ENCODE measurements at regions of chr20 and their contacts with region 1.

Region 1: DNA sequence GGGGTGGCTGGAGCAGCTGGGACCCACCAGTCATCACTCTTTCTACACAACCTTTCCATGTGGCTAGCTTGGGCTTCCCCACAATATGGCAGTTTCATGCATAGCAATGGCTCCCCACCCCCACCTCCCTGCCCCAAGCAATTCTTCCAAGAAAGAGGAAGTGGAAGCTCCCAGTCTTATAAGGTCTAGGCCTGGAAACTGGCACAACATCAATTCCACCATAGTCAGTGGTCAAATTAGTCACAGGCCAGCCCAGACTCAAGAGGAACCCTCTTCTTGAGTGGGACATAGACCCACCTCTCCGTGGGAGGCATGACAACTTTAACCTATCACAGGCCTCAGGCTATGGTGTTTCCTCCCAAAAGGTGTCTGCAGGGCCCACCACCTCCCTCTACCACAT is 17.7 kb downstream of the TGM6 start:
- DNase-seq: no peak
- H3K4me3 ChIP-seq: no peak overlapping the region
- H3K27ac ChIP-seq: no peak overlapping the region
- H3K4me1 ChIP-seq: no peaks in the 10 kb centered on the region
- CTCF ChIP-seq: no peak

Region 2: DNA sequence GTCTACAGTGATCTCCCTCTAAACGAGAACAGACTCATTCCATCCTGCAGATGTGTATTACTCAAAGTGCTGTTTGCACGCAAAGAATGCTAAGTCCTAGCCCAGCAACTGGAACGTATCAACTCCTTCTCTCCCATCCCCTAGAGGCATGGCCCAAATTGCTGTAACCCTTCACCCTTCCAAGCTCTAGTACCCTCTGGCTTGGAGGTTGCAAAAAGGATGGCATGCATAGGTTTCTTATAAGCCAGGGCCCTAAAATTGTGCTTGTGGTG is 174.1 kb before region 1 on chr20:
- CTCF ChIA-PET with region 1: no interaction called
- POLR2A ChIA-PET with region 1: interaction called, 12 read pairs
- intact Hi-C with region 1: no loop called
- DNase-seq: no peak
- H3K4me3 ChIP-seq: no peak overlapping the region
- H3K27ac ChIP-seq: no peak overlapping the region
- H3K4me1 ChIP-seq: no peaks in the 10 kb centered on the region
- CTCF ChIP-seq: no peak

Measured in OCI-LY7 (cell line).